Activated B cell treated with CpG ODN at 0.5 μM for 24 hours (primary cell): ENCODE measurements at regions of chr11 and their contacts with region 1.

Region 1: DNA sequence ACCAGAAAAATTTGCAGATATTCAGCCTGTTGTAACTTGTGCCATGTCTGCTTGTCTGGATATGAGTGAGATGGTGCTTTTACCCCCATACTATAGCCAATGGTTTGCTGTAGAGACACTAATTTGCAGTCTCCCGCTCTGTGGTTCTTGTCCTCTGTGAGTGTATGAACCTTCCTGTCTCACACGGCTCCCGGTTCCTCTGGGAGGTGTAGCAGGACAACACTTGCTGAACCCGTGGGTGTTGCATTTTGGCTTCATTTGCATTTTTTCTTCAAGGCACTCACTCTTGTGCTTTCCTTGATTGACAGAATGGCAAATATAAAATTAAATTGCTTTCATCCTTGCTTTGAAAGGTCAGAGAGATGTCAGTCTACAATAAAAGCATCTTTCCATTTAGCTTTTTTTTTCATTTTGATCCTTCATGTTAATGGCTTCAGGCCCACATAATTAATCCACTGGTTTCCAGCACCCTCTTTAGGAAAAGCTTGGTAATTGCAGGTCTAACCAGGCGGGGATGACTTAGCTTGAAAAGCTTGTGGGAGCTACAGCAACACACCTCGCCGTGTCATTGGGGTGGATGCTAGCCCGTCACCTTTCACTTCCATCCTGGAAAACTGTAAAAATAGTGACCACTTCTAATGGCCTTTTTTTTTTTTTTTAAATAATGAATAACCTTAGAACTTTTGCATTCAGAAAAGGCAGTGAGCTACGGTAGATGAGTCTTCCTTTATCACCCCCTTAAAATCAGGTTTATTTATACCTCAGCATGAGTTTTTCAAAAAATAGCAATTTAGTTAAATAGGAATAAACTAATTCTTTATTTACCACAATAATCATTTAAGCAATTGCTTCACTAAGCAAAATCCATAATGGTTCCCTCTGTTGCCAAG is 27.4 kb upstream of the ST14 start:
- DNase-seq: no peak
- ATAC-seq: peak; percentile 87
- H3K4me3 Mint-ChIP-seq: no peak overlapping the region
- H3K27ac Mint-ChIP-seq: no peak overlapping the region
- H3K4me1 Mint-ChIP-seq: peaks cover 19% of the 10 kb centered on the region
- H3K27me3 Mint-ChIP-seq: no peaks in the 10 kb centered on the region
- CTCF ChIP-seq: peak; percentile 56

Region 2: GRCh38 chr11:129117595-129118350 is 1014.4 kb before region 1 on chr11:
- CTCF ChIA-PET with region 1: no interaction called
- POLR2A ChIA-PET with region 1: no interaction called
- intact Hi-C with region 1: loop called (anchors 5 kb)
- DNase-seq: no peak
- ATAC-seq: no peak
- H3K4me3 Mint-ChIP-seq: no peak overlapping the region
- H3K27ac Mint-ChIP-seq: no peak overlapping the region
- H3K4me1 Mint-ChIP-seq: no peaks in the 10 kb centered on the region
- H3K27me3 Mint-ChIP-seq: no peaks in the 10 kb centered on the region
- CTCF ChIP-seq: peak; percentile 92

Region 3: DNA sequence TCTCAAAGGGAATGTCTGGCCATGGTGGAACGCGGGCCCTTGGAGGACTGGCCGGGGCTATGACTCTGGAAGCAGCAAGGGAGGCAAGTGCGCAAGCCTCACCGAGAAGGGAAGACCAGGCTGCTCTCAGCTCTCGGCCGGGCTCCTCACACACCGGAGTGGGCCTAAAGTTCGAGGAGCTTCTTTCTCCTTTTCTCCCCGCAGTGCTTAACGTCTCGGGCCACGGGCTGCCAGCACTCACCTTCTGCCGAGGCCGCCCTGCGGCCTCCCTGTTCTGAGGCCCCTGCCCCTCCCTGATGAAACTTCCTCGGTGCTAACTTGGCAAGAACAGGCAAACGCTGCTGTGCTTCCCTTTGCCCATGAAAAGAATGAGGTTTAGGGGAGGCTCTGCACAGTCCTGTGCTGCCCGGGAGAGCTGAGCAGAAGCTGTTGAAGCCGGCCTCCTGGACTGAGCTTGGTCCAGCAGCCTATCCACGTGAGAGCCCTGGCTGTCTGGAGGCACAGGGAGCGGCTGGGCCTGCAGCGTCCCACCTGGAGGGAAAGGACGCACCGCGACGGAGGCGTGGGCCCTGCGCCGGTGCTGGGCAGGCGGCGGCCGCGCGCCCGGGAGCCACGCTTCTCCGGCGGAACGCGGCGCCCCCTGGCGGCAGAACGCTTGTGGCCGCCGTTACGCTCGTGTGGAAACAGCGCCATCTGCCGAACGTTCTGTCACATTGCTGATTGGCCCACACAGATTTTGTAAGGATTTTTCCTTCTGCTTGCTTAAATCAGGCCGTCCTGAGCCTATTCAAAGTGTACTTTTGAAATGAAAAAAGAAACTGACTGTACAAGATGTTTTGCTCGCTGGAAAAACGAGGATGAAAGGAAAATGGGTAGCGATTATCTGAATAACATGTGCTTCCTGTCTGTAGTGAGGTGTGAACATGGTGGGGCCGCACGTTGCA is 381.6 kb before region 1 on chr11:
- CTCF ChIA-PET with region 1: no interaction called
- POLR2A ChIA-PET with region 1: no interaction called
- intact Hi-C with region 1: loop called (anchors 5 kb)
- DNase-seq: peak; percentile 69
- ATAC-seq: peak; percentile 81
- H3K4me3 Mint-ChIP-seq: no peak overlapping the region
- H3K27ac Mint-ChIP-seq: no peak overlapping the region
- H3K4me1 Mint-ChIP-seq: peaks cover 4% of the 10 kb centered on the region
- H3K27me3 Mint-ChIP-seq: peaks cover 27% of the 10 kb centered on the region
- CTCF ChIP-seq: peak; percentile 99

Region 4: GRCh38 chr11:129881570-129882170 is 250.5 kb before region 1 on chr11:
- CTCF ChIA-PET with region 1: interaction called, 30 read pairs
- POLR2A ChIA-PET with region 1: no interaction called
- intact Hi-C with region 1: loop called (anchors 1 kb)
- DNase-seq: no peak
- ATAC-seq: peak; percentile 52
- H3K4me3 Mint-ChIP-seq: no peak overlapping the region
- H3K27ac Mint-ChIP-seq: no peak overlapping the region
- H3K4me1 Mint-ChIP-seq: no peaks in the 10 kb centered on the region
- H3K27me3 Mint-ChIP-seq: no peaks in the 10 kb centered on the region
- CTCF ChIP-seq: no peak

Region 5: GRCh38 chr11:129992161-129992944 is 139.9 kb before region 1 on chr11:
- CTCF ChIA-PET with region 1: interaction called, 67 read pairs
- POLR2A ChIA-PET with region 1: no interaction called
- intact Hi-C with region 1: loop called (anchors 1 kb)
- DNase-seq: no peak
- ATAC-seq: peak; percentile 71
- H3K4me3 Mint-ChIP-seq: no peak overlapping the region
- H3K27ac Mint-ChIP-seq: no peak overlapping the region
- H3K4me1 Mint-ChIP-seq: peaks cover 7% of the 10 kb centered on the region
- H3K27me3 Mint-ChIP-seq: no peaks in the 10 kb centered on the region
- CTCF ChIP-seq: no peak

Region 6: GRCh38 chr11:130118636-130119387 is 13.4 kb before region 1 on chr11:
- CTCF ChIA-PET with region 1: interaction called, 27 read pairs
- POLR2A ChIA-PET with region 1: interaction called, 9 read pairs
- intact Hi-C with region 1: no loop called
- DNase-seq: peak; percentile 26
- ATAC-seq: peak; percentile 69
- H3K4me3 Mint-ChIP-seq: peak overlapping the region; percentile 22
- H3K27ac Mint-ChIP-seq: peak overlapping the region; percentile 75
- H3K4me1 Mint-ChIP-seq: peaks cover 93% of the 10 kb centered on the region
- H3K27me3 Mint-ChIP-seq: no peaks in the 10 kb centered on the region
- CTCF ChIP-seq: no peak

Region 7: GRCh38 chr11:130227373-130227772 is 95.2 kb after region 1 on chr11:
- CTCF ChIA-PET with region 1: no interaction called
- POLR2A ChIA-PET with region 1: no interaction called
- intact Hi-C with region 1: no loop called
- DNase-seq: no peak
- ATAC-seq: peak; percentile 69
- H3K4me3 Mint-ChIP-seq: no peak overlapping the region
- H3K27ac Mint-ChIP-seq: no peak overlapping the region
- H3K4me1 Mint-ChIP-seq: peaks cover 10% of the 10 kb centered on the region
- H3K27me3 Mint-ChIP-seq: no peaks in the 10 kb centered on the region
- CTCF ChIP-seq: no peak